Left ventricle myocardium superior (tissue), 1 donor: ENCODE measurements at regions of chr2 and their contacts with region 1.

Region 1: GRCh38 chr2:28958689-28959088 is 22.4 kb upstream of the TOGARAM2 start:
- DNase-seq: peak; percentile 72
- ATAC-seq: peak; percentile 90

Region 2: GRCh38 chr2:28870146-28870891 is 88.4 kb before region 1 on chr2 and contains the start of gene TRMT61B:
- intact Hi-C with region 1: no loop called
- DNase-seq: peak; percentile 99
- ATAC-seq: peak; percentile 100
- total RNA-seq, gene TRMT61B: 24.7 TPM

Region 3: DNA sequence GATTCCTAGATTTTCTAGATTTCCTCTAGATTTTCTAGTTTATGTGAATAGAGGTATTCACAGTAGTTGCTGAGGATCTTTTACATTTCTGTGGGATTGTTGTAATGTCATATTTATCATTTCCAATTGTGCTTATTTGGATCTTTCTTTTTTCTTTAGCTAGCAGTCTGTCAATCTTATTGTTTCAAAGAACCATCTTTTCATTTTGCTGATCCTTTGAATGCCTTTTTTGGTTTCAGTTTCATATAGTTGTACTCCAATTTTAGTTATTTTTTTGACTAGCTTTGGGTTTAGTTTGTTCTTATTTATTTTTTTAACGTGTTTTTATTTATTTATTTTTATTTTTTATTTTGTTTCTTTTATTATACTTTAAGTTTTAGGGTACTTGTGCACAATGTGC is 181.0 kb after region 1 on chr2:
- intact Hi-C with region 1: loop called (anchors 5 kb)
- DNase-seq: no peak
- ATAC-seq: no peak

Region 4: GRCh38 chr2:29195796-29196195 is 237.1 kb after region 1 on chr2:
- intact Hi-C with region 1: loop called (anchors 2 kb)
- DNase-seq: no peak
- ATAC-seq: no peak